Endothelial cell of umbilical vein (primary cell): ENCODE measurements at regions of chr1 and their contacts with region 1.

Region 1: DNA sequence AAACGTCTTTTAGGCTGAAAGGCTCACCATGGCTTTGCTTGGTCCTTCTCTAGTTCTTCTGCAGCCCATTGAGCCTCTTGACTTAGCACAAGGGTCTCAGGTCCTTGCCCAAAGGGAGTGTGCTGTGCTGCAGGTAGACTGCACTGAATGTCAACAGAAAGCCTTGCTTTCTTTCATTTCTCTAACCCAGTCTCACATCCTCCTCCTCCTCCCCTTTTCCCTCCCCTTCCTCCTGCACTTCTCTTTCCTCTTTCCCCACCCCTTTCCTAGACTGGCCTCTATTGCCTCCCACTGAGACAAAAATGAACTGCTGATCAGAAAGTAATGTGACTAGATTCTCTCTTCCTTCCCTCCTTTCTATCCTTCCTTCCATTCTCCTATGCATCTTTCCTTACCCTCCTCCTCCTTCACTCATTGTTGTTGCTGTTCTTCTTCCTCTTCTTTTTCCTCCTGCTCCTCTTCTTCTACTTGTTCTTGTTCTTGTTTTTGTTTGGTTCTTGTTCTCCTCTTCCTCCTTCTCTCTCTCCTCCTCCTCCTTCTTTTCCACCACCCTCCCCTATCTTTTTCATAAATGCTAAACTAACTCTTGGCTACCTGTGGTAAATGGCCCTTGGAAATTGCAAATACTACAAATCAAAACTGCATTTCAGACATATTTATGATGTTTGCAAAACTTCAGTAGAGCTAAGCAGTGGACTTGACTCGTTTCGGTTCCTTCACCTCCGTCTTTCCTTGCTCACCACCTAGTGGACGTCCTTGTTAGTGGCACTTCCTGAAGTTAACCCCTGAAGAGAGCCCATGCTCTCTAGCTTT is at the start of gene SELL:
- DNase-seq: peak; percentile 86
- H3K4me3 ChIP-seq: peak within 1 kb of the TSS in 1 of 3 experiments; percentile 42
- H3K27ac ChIP-seq: no peak within 1 kb of the TSS
- H3K4me1 ChIP-seq: no peaks in the 10 kb centered on the region
- H3K27me3 ChIP-seq: peaks cover 0 to 6% of the 10 kb centered on the region in 2 experiments
- CTCF ChIP-seq: peak; percentile 77 to 82
- POLR2A ChIP-seq: no peak
- total RNA-seq, gene SELL: 0.67 and 1.8 TPM in 2 replicates

Region 2: GRCh38 chr1:169466259-169467230 is 245.1 kb before region 1 on chr1:
- CTCF ChIA-PET with region 1: interaction called, 6 read pairs
- POLR2A ChIA-PET with region 1: no interaction called
- dilution Hi-C with region 1: no loop called
- intact Hi-C with region 1: loop called (anchors 5 kb)
- DNase-seq: peak; percentile 59
- H3K4me3 ChIP-seq: no peak overlapping the region
- H3K27ac ChIP-seq: no peak overlapping the region
- H3K4me1 ChIP-seq: no peaks in the 10 kb centered on the region
- H3K27me3 ChIP-seq: no peaks in the 10 kb centered on the region
- CTCF ChIP-seq: no peak
- POLR2A ChIP-seq: no peak

Region 3: GRCh38 chr1:169595764-169596711 is 115.6 kb before region 1 on chr1:
- CTCF ChIA-PET with region 1: interaction called, 230 read pairs
- POLR2A ChIA-PET with region 1: no interaction called
- dilution Hi-C with region 1: no loop called
- intact Hi-C with region 1: loop called (anchors 1 kb)
- DNase-seq: peak; percentile 46
- H3K4me3 ChIP-seq: no peak overlapping the region
- H3K27ac ChIP-seq: no peak overlapping the region
- H3K4me1 ChIP-seq: no peaks in the 10 kb centered on the region
- H3K27me3 ChIP-seq: peaks cover 3 to 12% of the 10 kb centered on the region in 2 experiments
- CTCF ChIP-seq: no peak
- POLR2A ChIP-seq: no peak

Region 4: GRCh38 chr1:169630006-169630405 is 81.7 kb before region 1 on chr1 and contains the start of gene SELP:
- CTCF ChIA-PET with region 1: interaction called, 10 read pairs
- POLR2A ChIA-PET with region 1: no interaction called
- dilution Hi-C with region 1: no loop called
- intact Hi-C with region 1: no loop called
- DNase-seq: peak; percentile 70
- H3K4me3 ChIP-seq: no peak within 1 kb of the TSS
- H3K27ac ChIP-seq: no peak within 1 kb of the TSS
- H3K4me1 ChIP-seq: peaks cover 9% of the 10 kb centered on the region
- H3K27me3 ChIP-seq: no peaks in the 10 kb centered on the region
- CTCF ChIP-seq: no peak
- POLR2A ChIP-seq: no peak
- total RNA-seq, gene SELP: 0.48 and 1.3 TPM in 2 replicates

Region 5: GRCh38 chr1:169701261-169702005 is 10.2 kb before region 1 on chr1:
- CTCF ChIA-PET with region 1: interaction called, 13 read pairs
- POLR2A ChIA-PET with region 1: no interaction called
- dilution Hi-C with region 1: no loop called
- intact Hi-C with region 1: no loop called
- DNase-seq: no peak
- H3K4me3 ChIP-seq: no peak overlapping the region
- H3K27ac ChIP-seq: no peak overlapping the region
- H3K4me1 ChIP-seq: peaks cover 5% of the 10 kb centered on the region
- H3K27me3 ChIP-seq: no peaks in the 10 kb centered on the region
- CTCF ChIP-seq: no peak
- POLR2A ChIP-seq: no peak

Region 6: GRCh38 chr1:169809370-169810095 is 97.9 kb after region 1 on chr1:
- CTCF ChIA-PET with region 1: interaction called, 40 read pairs
- POLR2A ChIA-PET with region 1: no interaction called
- dilution Hi-C with region 1: no loop called
- intact Hi-C with region 1: loop called (anchors 1 kb)
- DNase-seq: peak; percentile 58
- H3K4me3 ChIP-seq: no peak overlapping the region
- H3K27ac ChIP-seq: no peak overlapping the region
- H3K4me1 ChIP-seq: no peaks in the 10 kb centered on the region
- H3K27me3 ChIP-seq: no peaks in the 10 kb centered on the region
- CTCF ChIP-seq: peak in 1 of 2 donors; percentile 23
- POLR2A ChIP-seq: no peak